HepG2 (cell line): ENCODE measurements at regions of chr15 and their contacts with region 1.

Region 1: DNA sequence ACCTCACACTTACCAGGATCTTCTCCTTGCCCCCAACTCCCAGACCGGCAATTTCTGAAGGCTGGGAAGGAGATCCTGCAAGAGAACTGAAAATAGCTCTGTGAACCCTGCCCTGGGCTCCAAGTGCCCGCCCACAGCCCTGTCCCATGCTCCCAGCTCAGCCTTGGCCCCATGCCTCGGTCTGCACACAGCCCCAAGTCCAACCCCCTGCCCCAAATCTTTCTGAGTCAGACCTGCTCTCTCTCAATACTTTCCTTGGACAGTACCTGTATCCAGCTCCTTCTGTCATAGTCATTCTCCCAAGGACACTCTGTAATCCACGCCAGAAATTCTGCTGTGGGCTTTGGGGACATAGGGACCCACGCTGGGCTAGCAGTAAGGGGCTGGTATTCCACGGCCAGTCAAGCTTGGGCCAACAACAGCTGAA is 6.3 kb upstream of the SMAD3 start:
- DNase-seq: peak; percentile 64
- ATAC-seq: peak; percentile 74
- H3K4me3 ChIP-seq: peak overlapping the region; percentile 71 to 92 (median 83)
- H3K27ac ChIP-seq: peak overlapping the region; percentile 87
- H3K4me1 ChIP-seq: peaks cover 81% of the 10 kb centered on the region
- H3K27me3 ChIP-seq: no peaks in the 10 kb centered on the region; a peak in 1 of 5 replicates
- CTCF ChIP-seq: no peak
- EP300 ChIP-seq: peak in 1 of 2 experiments; percentile 37; a peak in 1 of 4 replicates
- POLR2A ChIP-seq: peak; percentile 49; a peak in 3 of 4 replicates
- RAD21 ChIP-seq: no peak

Region 2: DNA sequence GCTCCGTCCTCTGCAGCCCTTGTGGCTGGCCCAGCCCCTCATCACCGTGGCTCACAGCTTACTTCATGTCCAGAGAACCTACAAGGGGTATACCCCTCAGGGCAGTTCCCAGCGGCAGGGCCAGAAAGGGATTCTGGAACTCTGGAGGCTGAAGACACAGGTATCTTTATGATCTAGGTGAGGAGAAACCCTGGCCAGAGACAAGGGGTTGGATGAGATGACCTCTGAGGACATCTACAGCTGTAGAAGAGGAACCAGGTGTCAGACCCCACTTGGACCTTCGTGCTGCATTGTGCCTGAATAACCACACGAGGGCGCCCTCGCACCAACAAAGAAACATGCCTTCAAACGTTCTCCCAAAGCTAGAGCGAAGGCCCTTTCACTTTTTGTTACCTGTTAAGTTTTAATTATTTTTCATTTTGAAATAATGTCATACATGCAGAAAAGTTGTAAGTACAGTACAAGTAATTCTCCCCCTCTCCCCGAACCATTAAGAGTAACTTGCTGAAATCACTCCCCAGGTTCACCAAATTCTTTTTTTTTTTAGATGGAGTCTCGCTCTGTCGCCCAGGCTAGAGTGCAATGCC is 112.5 kb before region 1 on chr15:
- CTCF ChIA-PET with region 1: no interaction called
- POLR2A ChIA-PET with region 1: interaction called, 6 read pairs
- in situ Hi-C with region 1: loop called (anchors 5 kb)
- intact Hi-C with region 1: loop called (anchors 1 kb)
- DNase-seq: peak; percentile 67
- ATAC-seq: peak; percentile 65
- H3K4me3 ChIP-seq: peak overlapping the region in 1 of 3 experiments; percentile 25; a peak in 1 of 6 replicates
- H3K27ac ChIP-seq: no peak overlapping the region
- H3K4me1 ChIP-seq: peaks cover 42% of the 10 kb centered on the region
- H3K27me3 ChIP-seq: peaks cover 1 to 16% of the 10 kb centered on the region in 2 experiments; a peak in 3 of 5 replicates
- CTCF ChIP-seq: peak; percentile 93
- EP300 ChIP-seq: no peak
- POLR2A ChIP-seq: no peak
- RAD21 ChIP-seq: peak; percentile 89

Region 3: DNA sequence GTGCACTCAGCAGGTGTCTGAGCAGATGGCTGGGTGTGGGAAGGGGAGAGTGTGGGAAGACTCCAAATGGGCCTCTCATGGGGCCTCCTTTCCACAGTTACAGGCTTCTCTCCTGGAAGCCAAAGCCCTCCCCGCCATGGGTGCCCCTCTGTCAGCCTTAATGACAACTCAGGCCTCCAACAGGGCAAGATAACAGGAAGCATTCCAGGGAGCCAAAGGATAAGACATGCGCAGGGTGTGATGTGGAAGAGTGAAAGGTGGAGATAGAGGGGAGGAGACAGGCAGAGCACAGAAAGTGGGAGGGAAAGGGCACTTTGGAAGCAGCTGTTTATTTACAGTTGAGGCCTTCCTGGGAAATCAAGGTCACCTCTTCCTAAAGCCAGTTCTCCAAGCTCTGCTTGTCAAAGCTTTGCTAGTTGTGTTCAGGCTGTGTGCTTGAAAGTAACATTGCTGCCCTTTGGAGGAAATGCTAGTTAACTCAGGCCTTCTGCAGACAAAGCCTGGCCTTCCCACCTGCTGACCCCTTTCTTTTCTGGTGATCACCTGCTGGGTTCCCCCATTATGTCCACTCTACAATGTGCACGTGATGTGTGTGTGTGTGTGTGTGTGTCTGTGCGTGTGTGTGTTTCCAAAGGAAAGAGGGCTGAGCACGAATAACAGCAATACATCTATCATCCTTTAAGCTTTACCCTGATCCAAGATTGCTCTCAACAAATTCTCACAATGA is 28.9 kb before region 1 on chr15:
- CTCF ChIA-PET with region 1: no interaction called
- POLR2A ChIA-PET with region 1: interaction called, 18 read pairs
- in situ Hi-C with region 1: no loop called
- intact Hi-C with region 1: no loop called
- DNase-seq: peak; percentile 82
- ATAC-seq: peak; percentile 89
- H3K4me3 ChIP-seq: peak overlapping the region in 1 of 3 experiments; percentile 14; a peak in 1 of 6 replicates
- H3K27ac ChIP-seq: peak overlapping the region; percentile 49
- H3K4me1 ChIP-seq: peaks cover 59% of the 10 kb centered on the region
- H3K27me3 ChIP-seq: no peaks in the 10 kb centered on the region
- CTCF ChIP-seq: no peak
- EP300 ChIP-seq: peak in 1 of 2 experiments; percentile 61; a peak in 1 of 4 replicates
- POLR2A ChIP-seq: no peak
- RAD21 ChIP-seq: no peak

Region 4: GRCh38 chr15:67048281-67049279 is 10.6 kb before region 1 on chr15:
- CTCF ChIA-PET with region 1: no interaction called
- POLR2A ChIA-PET with region 1: interaction called, 248 read pairs
- in situ Hi-C with region 1: no loop called
- intact Hi-C with region 1: loop called (anchors 1 kb)
- DNase-seq: peak; percentile 97
- ATAC-seq: peak; percentile 91
- H3K4me3 ChIP-seq: peak overlapping the region; percentile 6 to 56 (median 36); a peak in 5 of 6 replicates
- H3K27ac ChIP-seq: peak overlapping the region; percentile 100
- H3K4me1 ChIP-seq: peaks cover 6% of the 10 kb centered on the region
- H3K27me3 ChIP-seq: no peaks in the 10 kb centered on the region
- CTCF ChIP-seq: no peak
- EP300 ChIP-seq: peak; percentile 77 to 86
- POLR2A ChIP-seq: peak in 1 of 2 experiments; percentile 88; a peak in 2 of 4 replicates
- RAD21 ChIP-seq: peak; percentile 23; the same call in 1 of the 2 replicates

Region 5: GRCh38 chr15:67146875-67147381 is 87.8 kb after region 1 on chr15:
- CTCF ChIA-PET with region 1: no interaction called
- POLR2A ChIA-PET with region 1: interaction called, 17 read pairs
- in situ Hi-C with region 1: no loop called
- intact Hi-C with region 1: loop called (anchors 5 kb)
- DNase-seq: peak; percentile 97
- ATAC-seq: peak; percentile 94
- H3K4me3 ChIP-seq: peak overlapping the region; percentile 30 to 44 (median 35); a peak in 4 of 6 replicates
- H3K27ac ChIP-seq: peak overlapping the region; percentile 76
- H3K4me1 ChIP-seq: peaks cover 83% of the 10 kb centered on the region
- H3K27me3 ChIP-seq: no peaks in the 10 kb centered on the region
- CTCF ChIP-seq: no peak
- EP300 ChIP-seq: peak; percentile 37 to 88; a peak in 3 of 4 replicates
- POLR2A ChIP-seq: no peak
- RAD21 ChIP-seq: no peak